GM12878 (cell line): ENCODE measurements at regions of chr12 and their contacts with region 1.

Region 1: DNA sequence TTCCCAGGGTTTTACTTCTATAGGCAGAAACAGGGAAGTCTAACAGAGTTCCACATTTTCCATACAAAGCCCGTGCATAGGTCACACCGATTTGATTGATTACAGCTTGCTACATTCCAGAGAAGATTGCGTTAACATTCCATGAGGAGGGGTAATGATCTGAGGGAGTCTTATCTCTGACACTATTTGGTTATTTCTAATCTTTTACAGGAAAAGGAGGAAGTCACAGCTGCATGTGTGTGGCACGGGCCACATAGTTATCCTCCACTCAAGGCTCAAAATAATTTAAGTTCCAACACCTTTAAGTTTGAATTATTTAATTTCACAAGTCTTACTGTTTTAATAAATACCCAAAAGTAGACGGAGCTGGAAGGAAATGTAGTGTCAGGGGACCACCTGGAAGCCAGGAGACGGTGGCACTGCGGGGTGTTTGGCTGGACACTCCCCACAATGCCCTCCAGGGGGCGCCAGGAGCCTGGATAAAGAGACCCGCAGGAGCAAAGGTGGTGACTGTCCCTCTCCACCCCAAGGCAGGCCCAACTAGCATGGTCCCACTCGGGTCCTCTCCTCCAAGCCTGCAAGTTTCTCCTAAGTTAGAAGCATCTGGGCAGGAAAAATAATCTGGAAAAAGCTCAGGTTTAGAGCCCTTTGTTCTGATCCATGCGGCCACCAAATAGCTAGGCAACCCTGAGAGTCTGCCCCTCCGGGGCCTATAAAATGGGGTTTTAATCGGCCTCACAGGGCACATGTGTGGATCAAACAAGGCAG is 20.2 kb downstream of the KRT8 start:
- DNase-seq: no peak
- ATAC-seq: peak; percentile 96
- H3K4me3 ChIP-seq: no peak overlapping the region
- H3K27ac ChIP-seq: no peak overlapping the region
- H3K4me1 ChIP-seq: no peaks in the 10 kb centered on the region
- H3K27me3 ChIP-seq: no peaks in the 10 kb centered on the region; a peak in 1 of 4 replicates
- CTCF ChIP-seq: peak; percentile 83 to 88 (median 87)
- EP300 ChIP-seq: no peak
- POLR2A ChIP-seq: no peak
- RAD21 ChIP-seq: peak; percentile 88

Region 2: GRCh38 chr12:52627395-52628110 is 257.2 kb before region 1 on chr12:
- CTCF ChIA-PET with region 1: no interaction called
- POLR2A ChIA-PET with region 1: no interaction called
- RAD21 ChIA-PET with region 1: no interaction called
- SMC1A ChIA-PET with region 1: no interaction called
- in situ Hi-C with region 1: no loop called
- intact Hi-C with region 1: no loop called
- DNase-seq: no peak
- ATAC-seq: no peak
- H3K4me3 ChIP-seq: no peak overlapping the region
- H3K27ac ChIP-seq: no peak overlapping the region
- H3K4me1 ChIP-seq: no peaks in the 10 kb centered on the region
- H3K27me3 ChIP-seq: no peaks in the 10 kb centered on the region; a peak in 1 of 4 replicates
- CTCF ChIP-seq: no peak
- EP300 ChIP-seq: no peak
- POLR2A ChIP-seq: no peak
- RAD21 ChIP-seq: no peak

Region 3: DNA sequence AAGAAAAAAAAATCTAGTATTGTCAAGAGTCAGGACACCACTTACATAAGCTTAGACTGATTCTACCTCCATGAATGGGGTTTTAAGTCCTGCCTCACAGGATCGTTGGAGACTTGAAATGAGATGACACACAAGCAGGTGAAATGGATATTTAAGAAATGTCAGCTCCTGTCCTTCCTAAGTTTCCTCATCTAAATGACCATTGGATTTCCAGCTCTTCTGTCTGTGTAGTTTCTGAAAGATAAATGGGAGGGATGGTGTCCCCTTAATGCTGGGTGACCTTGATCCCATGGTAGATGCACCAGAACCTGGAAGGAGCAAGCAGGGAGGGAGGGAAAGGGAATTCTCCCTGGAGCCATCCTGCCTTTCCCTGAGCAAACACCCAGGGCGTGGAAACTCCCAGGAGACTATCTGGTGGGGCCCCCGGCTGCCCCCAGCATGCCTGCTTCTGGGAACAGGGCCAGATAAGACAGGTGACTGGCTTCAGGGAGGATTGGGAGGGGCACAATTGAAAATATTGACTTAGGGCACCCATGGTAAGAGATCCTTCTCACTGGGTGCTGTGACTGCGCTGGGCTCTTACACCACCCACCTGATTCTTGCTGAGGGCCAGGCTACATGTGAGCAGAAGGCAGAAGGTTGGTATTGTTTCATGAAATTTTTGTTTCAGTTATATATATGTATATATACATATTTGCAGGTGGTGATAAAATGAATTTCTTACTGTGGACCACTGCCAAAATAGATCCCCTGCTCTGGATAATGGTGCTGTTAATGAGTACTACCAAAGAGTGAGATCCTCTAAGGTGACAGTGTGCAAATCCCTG is 10.6 kb after region 1 on chr12:
- CTCF ChIA-PET with region 1: interaction called, 49 read pairs
- POLR2A ChIA-PET with region 1: no interaction called
- RAD21 ChIA-PET with region 1: interaction called, 7 read pairs
- SMC1A ChIA-PET with region 1: interaction called, 16 read pairs
- in situ Hi-C with region 1: no loop called
- intact Hi-C with region 1: no loop called
- DNase-seq: no peak
- ATAC-seq: no peak
- H3K4me3 ChIP-seq: no peak overlapping the region
- H3K27ac ChIP-seq: no peak overlapping the region
- H3K4me1 ChIP-seq: no peaks in the 10 kb centered on the region
- H3K27me3 ChIP-seq: no peaks in the 10 kb centered on the region
- CTCF ChIP-seq: no peak
- EP300 ChIP-seq: no peak
- POLR2A ChIP-seq: no peak
- RAD21 ChIP-seq: no peak

Region 4: DNA sequence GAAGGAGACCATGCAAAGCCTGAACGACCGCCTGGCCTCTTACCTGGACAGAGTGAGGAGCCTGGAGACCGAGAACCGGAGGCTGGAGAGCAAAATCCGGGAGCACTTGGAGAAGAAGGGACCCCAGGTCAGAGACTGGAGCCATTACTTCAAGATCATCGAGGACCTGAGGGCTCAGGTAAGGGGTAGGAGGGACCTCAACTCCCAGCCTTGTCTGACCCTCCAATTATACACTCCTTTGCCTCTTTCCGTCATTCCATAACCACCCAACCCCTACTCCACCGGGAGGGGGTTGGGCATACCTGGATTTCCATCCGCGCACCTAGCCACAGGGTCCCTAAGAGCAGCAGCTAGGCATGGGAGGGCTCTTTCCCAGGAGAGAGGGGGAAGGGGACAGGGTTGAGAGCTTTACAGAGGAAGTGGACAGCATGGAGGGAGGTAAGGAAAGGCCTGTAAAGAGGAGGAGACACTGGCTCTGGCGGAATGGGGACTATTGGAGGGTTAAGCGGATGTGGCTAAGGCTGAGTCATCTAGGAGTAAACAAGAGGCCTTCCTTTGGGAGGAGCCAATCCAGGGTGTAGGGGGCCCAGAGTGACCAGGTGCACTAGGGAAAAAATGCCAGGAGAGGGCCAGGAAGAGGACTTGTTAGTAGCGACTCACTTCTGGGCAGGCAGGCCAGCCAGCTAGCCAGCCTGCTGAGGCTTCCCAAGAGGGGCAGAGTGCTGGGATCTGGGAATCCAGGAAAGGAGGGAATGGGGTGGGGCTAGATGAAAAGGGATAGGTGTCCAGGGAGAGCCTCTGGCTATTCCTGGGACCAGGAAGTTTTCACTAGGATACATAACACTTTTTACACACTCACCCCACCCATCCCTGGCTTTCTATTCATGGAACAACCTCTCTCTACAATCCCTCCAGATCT is 65.0 kb after region 1 on chr12:
- CTCF ChIA-PET with region 1: interaction called, 23 read pairs
- POLR2A ChIA-PET with region 1: no interaction called
- RAD21 ChIA-PET with region 1: interaction called, 8 read pairs
- SMC1A ChIA-PET with region 1: interaction called, 14 read pairs
- in situ Hi-C with region 1: no loop called
- intact Hi-C with region 1: no loop called
- DNase-seq: no peak
- ATAC-seq: no peak
- H3K4me3 ChIP-seq: no peak overlapping the region
- H3K27ac ChIP-seq: no peak overlapping the region
- H3K4me1 ChIP-seq: no peaks in the 10 kb centered on the region
- H3K27me3 ChIP-seq: peaks cover 4% of the 10 kb centered on the region in 2 experiments; a peak in 3 of 4 replicates
- CTCF ChIP-seq: no peak
- EP300 ChIP-seq: no peak
- POLR2A ChIP-seq: no peak
- RAD21 ChIP-seq: no peak

Region 5: DNA sequence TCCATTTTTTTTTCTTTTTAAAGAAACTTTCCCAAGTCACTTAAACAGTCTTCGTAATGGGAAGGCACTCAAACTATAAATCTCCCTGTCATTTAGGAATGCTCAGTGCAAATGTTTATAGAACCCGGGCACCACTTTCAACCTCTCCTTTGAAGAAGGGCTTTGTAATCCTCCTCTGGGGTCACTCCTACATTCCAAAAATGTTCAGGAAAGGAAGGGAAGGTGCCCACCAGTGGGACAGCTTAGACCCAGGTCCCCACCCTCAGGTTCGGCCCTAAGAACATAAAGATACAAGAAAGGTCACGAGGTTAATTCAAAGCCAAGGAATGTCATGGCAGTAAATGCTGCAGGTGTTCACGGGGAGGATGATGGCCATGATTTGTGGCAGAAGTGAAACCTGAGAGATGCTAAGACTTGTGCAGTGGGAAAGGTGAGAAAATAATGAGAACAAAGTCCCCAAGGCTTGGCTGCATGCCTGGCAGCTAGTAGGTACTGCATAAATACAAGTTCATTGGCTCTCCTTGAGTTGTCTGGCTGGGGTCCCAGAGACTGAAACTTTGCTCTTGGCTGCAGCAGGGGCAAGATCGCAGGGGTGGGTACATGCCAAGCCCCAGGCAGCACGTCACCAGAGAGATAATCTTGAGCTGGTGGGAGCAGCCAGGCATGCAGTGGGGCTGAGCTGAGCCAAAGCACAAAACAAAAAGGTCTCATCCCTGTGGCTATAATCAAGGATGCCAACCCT is 85.3 kb after region 1 on chr12:
- CTCF ChIA-PET with region 1: interaction called, 19 read pairs
- POLR2A ChIA-PET with region 1: no interaction called
- RAD21 ChIA-PET with region 1: interaction called, 12 read pairs
- SMC1A ChIA-PET with region 1: interaction called, 4 read pairs
- in situ Hi-C with region 1: no loop called
- intact Hi-C with region 1: no loop called
- DNase-seq: peak; percentile 39
- ATAC-seq: peak; percentile 71
- H3K4me3 ChIP-seq: no peak overlapping the region
- H3K27ac ChIP-seq: no peak overlapping the region
- H3K4me1 ChIP-seq: peaks cover 10% of the 10 kb centered on the region
- H3K27me3 ChIP-seq: no peaks in the 10 kb centered on the region; a peak in 1 of 4 replicates
- CTCF ChIP-seq: no peak
- EP300 ChIP-seq: no peak
- POLR2A ChIP-seq: no peak
- RAD21 ChIP-seq: no peak

Region 6: GRCh38 chr12:53005986-53006809 is 121.5 kb after region 1 on chr12 and contains the start of gene EIF4B:
- CTCF ChIA-PET with region 1: interaction called, 12 read pairs
- POLR2A ChIA-PET with region 1: no interaction called
- RAD21 ChIA-PET with region 1: interaction called, 5 read pairs
- SMC1A ChIA-PET with region 1: no interaction called
- in situ Hi-C with region 1: no loop called
- intact Hi-C with region 1: no loop called
- DNase-seq: peak; percentile 99
- ATAC-seq: peak; percentile 95
- H3K4me3 ChIP-seq: peak within 1 kb of the TSS; percentile 91
- H3K27ac ChIP-seq: peak within 1 kb of the TSS; percentile 95
- H3K4me1 ChIP-seq: peaks cover 2% of the 10 kb centered on the region; the same call in 1 of the 2 replicates
- H3K27me3 ChIP-seq: no peaks in the 10 kb centered on the region
- CTCF ChIP-seq: no peak
- EP300 ChIP-seq: 0 out of 4 replicates have a peak, but pooled peaks have one; percentile 30 to 43
- POLR2A ChIP-seq: peak; percentile 81
- RAD21 ChIP-seq: no peak
- polyA plus RNA-seq, gene EIF4B: 133 to 144 TPM